Activated naive CD4-positive, alpha-beta T cell treated with anti-CD3 and anti-CD28 coated beads for 36 hours (primary cell): ENCODE measurements at regions of chr7 and their contacts with region 1.

Region 1: DNA sequence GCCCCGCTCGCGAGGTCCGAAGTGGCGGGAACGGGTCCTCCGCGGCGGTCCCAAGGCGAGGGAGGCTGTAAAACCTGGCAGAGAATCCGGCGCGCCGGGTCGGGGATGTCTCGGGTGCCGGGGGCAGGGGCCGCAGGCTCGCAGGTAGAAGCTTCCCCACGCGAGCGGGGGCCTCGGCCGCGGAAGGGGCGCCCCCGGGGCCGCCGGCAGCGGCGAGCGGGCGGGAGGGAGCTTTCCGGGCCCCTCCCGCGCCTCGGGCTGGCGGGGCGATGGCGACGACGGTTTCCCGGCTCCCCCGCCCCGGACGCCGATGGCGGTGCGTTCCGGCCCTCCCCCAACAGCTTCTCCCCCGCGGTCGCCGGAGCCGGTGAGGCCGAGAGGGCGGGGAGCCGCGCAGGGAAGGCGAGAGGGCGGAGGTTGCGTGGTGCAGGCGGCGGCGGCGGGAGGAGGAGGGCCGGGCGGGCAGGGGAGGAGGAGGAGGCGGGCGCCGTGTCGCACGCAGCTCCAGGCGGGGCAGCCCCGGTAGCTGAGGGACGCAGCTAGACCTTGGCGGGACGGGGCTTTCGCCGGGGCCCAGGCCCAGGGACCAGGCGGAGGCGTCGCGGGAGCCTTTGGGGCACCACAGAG is at the start of gene CUL1:
- DNase-seq: peak; percentile 89
- H3K4me3 Mint-ChIP-seq: peak within 1 kb of the TSS; percentile 86
- H3K27ac Mint-ChIP-seq: peak within 1 kb of the TSS; percentile 97
- H3K4me1 Mint-ChIP-seq: peaks cover 53% of the 10 kb centered on the region
- H3K27me3 Mint-ChIP-seq: no peaks in the 10 kb centered on the region
- total RNA-seq, gene CUL1: 59.6 to 62.2 TPM

Region 2: GRCh38 chr7:148362541-148362940 is 336.0 kb before region 1 on chr7:
- CTCF ChIA-PET with region 1: no interaction called
- intact Hi-C with region 1: no loop called
- DNase-seq: no peak
- H3K4me3 Mint-ChIP-seq: no peak overlapping the region
- H3K27ac Mint-ChIP-seq: no peak overlapping the region
- H3K4me1 Mint-ChIP-seq: no peaks in the 10 kb centered on the region
- H3K27me3 Mint-ChIP-seq: no peaks in the 10 kb centered on the region

Region 3: DNA sequence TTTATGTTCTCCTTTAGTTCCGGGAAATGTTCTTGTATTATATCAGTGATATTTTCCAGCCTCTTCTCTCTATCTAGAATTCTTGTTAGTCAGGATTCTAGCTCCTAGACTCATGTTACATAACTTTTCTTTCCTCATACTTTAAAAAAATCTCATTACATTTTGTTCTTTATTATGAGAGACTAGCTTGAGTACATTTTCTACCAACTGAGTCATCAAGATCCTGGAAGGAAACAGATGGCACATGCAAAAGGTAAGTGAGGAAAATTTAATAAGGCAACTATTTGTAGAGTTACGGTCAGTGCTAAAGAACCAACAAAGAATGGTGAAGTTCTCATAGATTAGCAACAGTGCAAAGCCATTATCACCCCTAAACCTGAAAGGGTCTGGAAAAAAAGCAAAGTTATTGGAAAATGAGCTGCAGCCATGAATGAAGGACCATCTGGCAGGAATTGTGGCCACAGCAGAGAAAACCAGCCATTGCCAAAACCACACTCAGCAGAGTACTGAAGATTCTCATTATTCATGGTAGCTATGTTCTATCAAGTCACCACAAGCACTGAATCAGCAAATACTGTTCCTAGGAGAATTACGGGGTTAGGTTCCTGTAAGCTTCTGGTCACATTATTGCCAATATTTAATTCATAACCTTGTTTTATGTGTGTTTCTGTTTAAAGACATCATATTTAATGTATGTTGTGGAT is 206.2 kb before region 1 on chr7:
- CTCF ChIA-PET with region 1: no interaction called
- intact Hi-C with region 1: no loop called
- DNase-seq: no peak
- H3K4me3 Mint-ChIP-seq: no peak overlapping the region
- H3K27ac Mint-ChIP-seq: no peak overlapping the region
- H3K4me1 Mint-ChIP-seq: no peaks in the 10 kb centered on the region
- H3K27me3 Mint-ChIP-seq: peaks cover 19% of the 10 kb centered on the region

Region 4: GRCh38 chr7:148503875-148504487 is 194.5 kb before region 1 on chr7:
- CTCF ChIA-PET with region 1: no interaction called
- intact Hi-C with region 1: loop called (anchors 1 kb)
- DNase-seq: no peak
- H3K4me3 Mint-ChIP-seq: no peak overlapping the region
- H3K27ac Mint-ChIP-seq: no peak overlapping the region
- H3K4me1 Mint-ChIP-seq: peaks cover 32% of the 10 kb centered on the region
- H3K27me3 Mint-ChIP-seq: peaks cover 21% of the 10 kb centered on the region

Region 5: GRCh38 chr7:148575640-148576411 is 122.7 kb before region 1 on chr7:
- CTCF ChIA-PET with region 1: interaction called, 3 read pairs
- intact Hi-C with region 1: loop called (anchors 1 kb)
- DNase-seq: peak; percentile 84
- H3K4me3 Mint-ChIP-seq: no peak overlapping the region
- H3K27ac Mint-ChIP-seq: no peak overlapping the region
- H3K4me1 Mint-ChIP-seq: peaks cover 11% of the 10 kb centered on the region
- H3K27me3 Mint-ChIP-seq: no peaks in the 10 kb centered on the region

Region 6: GRCh38 chr7:148633761-148634160 is 64.7 kb before region 1 on chr7:
- CTCF ChIA-PET with region 1: interaction called, 4 read pairs
- intact Hi-C with region 1: loop called (anchors 1 kb)
- DNase-seq: peak; percentile 44
- H3K4me3 Mint-ChIP-seq: no peak overlapping the region
- H3K27ac Mint-ChIP-seq: peak overlapping the region; percentile 75
- H3K4me1 Mint-ChIP-seq: peaks cover 26% of the 10 kb centered on the region
- H3K27me3 Mint-ChIP-seq: no peaks in the 10 kb centered on the region

Region 7: DNA sequence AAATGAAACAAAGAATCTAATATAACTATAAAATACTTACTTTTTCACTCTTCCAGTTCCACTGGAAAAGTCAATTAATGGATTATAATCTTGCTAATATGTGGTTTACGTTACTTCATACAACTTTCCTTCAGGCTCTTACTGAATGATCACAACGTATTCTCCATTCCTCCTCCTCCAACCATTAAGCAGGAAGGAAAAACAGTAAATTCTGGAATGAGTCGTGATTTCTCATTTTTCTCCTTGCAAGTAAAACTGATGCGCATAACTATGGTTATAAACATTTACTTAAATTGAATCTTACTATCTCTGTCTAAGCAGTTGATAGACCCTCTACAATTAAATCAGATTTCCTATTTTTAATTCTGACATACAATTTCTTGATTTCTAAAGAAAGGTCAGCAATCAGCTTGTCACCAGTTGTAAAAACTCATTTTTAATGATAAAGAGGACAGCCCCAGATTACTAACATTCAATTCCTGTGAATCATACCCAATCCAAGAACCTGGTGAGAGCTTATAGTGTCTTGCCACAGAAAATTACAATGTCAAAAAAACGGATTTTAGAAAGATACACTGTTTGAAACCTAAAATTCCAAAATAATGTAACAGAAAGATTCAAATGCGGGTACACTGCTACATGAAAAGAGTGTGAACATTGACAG is 121.3 kb after region 1 on chr7:
- CTCF ChIA-PET with region 1: no interaction called
- intact Hi-C with region 1: no loop called
- DNase-seq: no peak
- H3K4me3 Mint-ChIP-seq: no peak overlapping the region
- H3K27ac Mint-ChIP-seq: no peak overlapping the region
- H3K4me1 Mint-ChIP-seq: peaks cover 3% of the 10 kb centered on the region
- H3K27me3 Mint-ChIP-seq: no peaks in the 10 kb centered on the region

Region 8: GRCh38 chr7:148884299-148885022 is 186.0 kb after region 1 on chr7:
- CTCF ChIA-PET with region 1: no interaction called
- intact Hi-C with region 1: loop called (anchors 1 kb)
- DNase-seq: peak; percentile 93
- H3K4me3 Mint-ChIP-seq: peak overlapping the region; percentile 94
- H3K27ac Mint-ChIP-seq: peak overlapping the region; percentile 99
- H3K4me1 Mint-ChIP-seq: peaks cover 37% of the 10 kb centered on the region
- H3K27me3 Mint-ChIP-seq: no peaks in the 10 kb centered on the region

Region 9: DNA sequence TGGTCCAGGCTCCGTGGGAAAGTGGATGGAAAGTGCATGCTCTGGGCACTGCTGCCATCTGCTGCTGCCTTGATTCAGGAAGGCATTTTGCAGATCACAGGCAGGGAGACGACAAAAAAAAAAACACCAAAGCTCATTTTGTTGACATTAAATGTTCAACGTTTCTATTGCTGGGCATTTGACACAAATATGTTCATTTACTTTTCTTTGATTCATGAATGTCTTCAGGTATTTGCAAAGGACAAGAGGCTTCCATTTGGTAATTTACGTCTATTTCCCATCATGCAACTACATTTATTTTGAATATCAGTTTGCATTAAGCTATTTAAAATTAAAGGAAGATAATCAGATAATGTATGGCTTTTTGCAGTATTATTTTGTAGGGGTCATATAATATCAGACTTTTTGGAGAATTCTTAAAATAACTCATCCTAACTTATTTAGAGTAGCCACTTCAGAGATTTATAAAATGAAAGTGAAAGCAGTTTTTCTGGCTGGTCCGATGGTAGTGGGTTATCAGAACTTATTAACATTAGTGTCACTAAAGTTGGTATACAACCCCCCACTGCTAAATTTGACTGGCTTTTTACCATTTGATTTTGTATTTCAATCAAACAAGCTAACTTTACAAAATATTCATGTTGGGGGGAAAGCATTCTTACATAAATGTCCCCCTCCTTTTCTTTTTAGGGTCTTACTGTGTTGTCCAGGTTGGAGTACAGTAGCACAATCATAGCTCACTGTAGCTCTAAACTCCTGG is 264.5 kb after region 1 on chr7:
- CTCF ChIA-PET with region 1: interaction called, 5 read pairs
- intact Hi-C with region 1: loop called (anchors 2 kb)
- DNase-seq: peak; percentile 86
- H3K4me3 Mint-ChIP-seq: peak overlapping the region; percentile 91
- H3K27ac Mint-ChIP-seq: peak overlapping the region; percentile 95
- H3K4me1 Mint-ChIP-seq: peaks cover 25% of the 10 kb centered on the region
- H3K27me3 Mint-ChIP-seq: no peaks in the 10 kb centered on the region

Region 10: GRCh38 chr7:149090397-149091195 is 392.1 kb after region 1 on chr7 and contains the start of gene ZNF786:
- CTCF ChIA-PET with region 1: no interaction called
- intact Hi-C with region 1: loop called (anchors 2 kb)
- DNase-seq: peak; percentile 94
- H3K4me3 Mint-ChIP-seq: peak within 1 kb of the TSS; percentile 90
- H3K27ac Mint-ChIP-seq: peak within 1 kb of the TSS; percentile 99
- H3K4me1 Mint-ChIP-seq: peaks cover 20% of the 10 kb centered on the region
- H3K27me3 Mint-ChIP-seq: no peaks in the 10 kb centered on the region
- total RNA-seq, gene ZNF786: 2.1 to 2.2 TPM